T-cell (primary cell): ENCODE measurements at regions of chr17 and their contacts with region 1.

Region 1: GRCh38 chr17:48612854-48613691 is 2.0 kb downstream of the HOXB8 start:
- DNase-seq: peak in 17 of 35 experiments; percentile 28 to 73 (median 42)
- ATAC-seq: peak; percentile 65 to 77 (median 69)
- H3K4me3 ChIP-seq: peak overlapping the region; percentile 53 to 81
- H3K4me3 Mint-ChIP-seq: peak overlapping the region; percentile 74 to 92 (median 82)
- H3K27ac ChIP-seq: no peak overlapping the region
- H3K27ac Mint-ChIP-seq: peak overlapping the region in 1 of 2 donors; percentile 65
- H3K4me1 ChIP-seq: peaks cover 20 to 69% of the 10 kb centered on the region in 2 experiments
- H3K4me1 Mint-ChIP-seq: peaks cover 39 to 55% (median 51%) of the 10 kb centered on the region in 3 donors
- H3K27me3 ChIP-seq: peaks cover 23 to 93% of the 10 kb centered on the region in 2 experiments
- H3K27me3 Mint-ChIP-seq: peaks cover 64 to 80% of the 10 kb centered on the region in 2 donors

Region 2: GRCh38 chr17:48283411-48283810 is 329.7 kb before region 1 on chr17:
- CTCF ChIA-PET with region 1: interaction called, 3 to 10 read pairs
- POLR2A ChIA-PET with region 1: no interaction called
- DNase-seq: no peak
- ATAC-seq: no peak
- H3K4me3 ChIP-seq: no peak overlapping the region
- H3K4me3 Mint-ChIP-seq: no peak overlapping the region
- H3K27ac ChIP-seq: no peak overlapping the region
- H3K27ac Mint-ChIP-seq: no peak overlapping the region
- H3K4me1 ChIP-seq: no peaks in the 10 kb centered on the region
- H3K4me1 Mint-ChIP-seq: peaks cover 20 to 31% (median 22%) of the 10 kb centered on the region in 3 donors
- H3K27me3 ChIP-seq: no peaks in the 10 kb centered on the region
- H3K27me3 Mint-ChIP-seq: no peaks in the 10 kb centered on the region